Thyroid gland (tissue), 4 donors: ENCODE measurements at regions of chr20 and their contacts with region 1.

Region 1: DNA sequence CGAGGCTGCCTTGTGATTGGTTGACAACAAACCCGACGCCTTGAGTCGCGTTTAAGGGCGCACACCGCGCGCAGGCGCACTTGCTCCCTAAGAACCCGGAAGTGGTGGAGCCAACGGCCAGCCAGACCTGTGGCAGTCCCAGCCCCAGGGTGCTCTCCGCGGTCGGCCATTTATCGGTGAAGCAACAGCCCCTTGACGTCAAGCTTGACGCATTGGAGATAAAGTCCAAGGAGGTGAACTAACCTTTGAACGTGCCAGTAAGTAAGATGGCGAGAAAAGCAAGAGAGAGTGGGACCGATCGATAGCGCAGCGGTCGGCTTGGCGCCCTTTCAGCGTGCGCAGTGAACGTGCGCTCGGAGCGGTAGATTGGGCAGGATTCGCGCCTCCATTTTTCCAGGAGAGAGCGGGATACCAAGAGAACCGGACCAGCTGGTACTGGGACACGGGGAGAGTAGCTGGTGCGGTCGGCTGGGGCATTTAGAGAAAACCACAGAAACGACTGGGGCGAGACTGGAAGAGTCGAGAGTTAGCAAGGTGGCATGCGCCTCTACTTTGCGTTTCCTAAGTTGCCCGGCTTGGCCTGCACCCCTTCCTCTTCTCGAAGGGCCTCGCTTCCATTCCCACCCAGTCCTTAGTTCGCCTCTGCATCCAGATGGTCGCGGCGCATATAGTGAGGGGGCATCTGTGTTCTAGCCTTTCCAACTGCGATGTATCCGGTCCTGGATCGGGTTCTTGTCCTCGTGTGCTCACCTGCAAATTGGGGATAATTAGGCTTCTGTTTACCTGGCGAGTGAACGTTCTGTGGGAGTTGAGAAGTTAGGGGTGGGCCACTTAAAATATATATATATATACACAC is at the start of gene CSTF1:
- DNase-seq: peak; percentile 99 to 100
- H3K4me3 ChIP-seq: peak within 1 kb of the TSS; percentile 61 to 73 (median 67)
- H3K27ac ChIP-seq: peak within 1 kb of the TSS; percentile 53 to 91 (median 82)
- H3K4me1 ChIP-seq: peaks cover 15 to 18% of the 10 kb centered on the region in 2 donors
- H3K27me3 ChIP-seq: no peaks in the 10 kb centered on the region
- CTCF ChIP-seq: no peak
- POLR2A ChIP-seq: peak in 1 of 2 donors; percentile 72
- total RNA-seq, gene CSTF1: 26.9 to 36.8 (median 32.6) TPM

Region 2: GRCh38 chr20:56257604-56258003 is 134.9 kb before region 1 on chr20:
- intact Hi-C with region 1: no loop called
- DNase-seq: no peak
- H3K4me3 ChIP-seq: no peak overlapping the region
- H3K27ac ChIP-seq: no peak overlapping the region
- H3K4me1 ChIP-seq: no peaks in the 10 kb centered on the region
- H3K27me3 ChIP-seq: no peaks in the 10 kb centered on the region
- CTCF ChIP-seq: no peak
- POLR2A ChIP-seq: no peak

Region 3: DNA sequence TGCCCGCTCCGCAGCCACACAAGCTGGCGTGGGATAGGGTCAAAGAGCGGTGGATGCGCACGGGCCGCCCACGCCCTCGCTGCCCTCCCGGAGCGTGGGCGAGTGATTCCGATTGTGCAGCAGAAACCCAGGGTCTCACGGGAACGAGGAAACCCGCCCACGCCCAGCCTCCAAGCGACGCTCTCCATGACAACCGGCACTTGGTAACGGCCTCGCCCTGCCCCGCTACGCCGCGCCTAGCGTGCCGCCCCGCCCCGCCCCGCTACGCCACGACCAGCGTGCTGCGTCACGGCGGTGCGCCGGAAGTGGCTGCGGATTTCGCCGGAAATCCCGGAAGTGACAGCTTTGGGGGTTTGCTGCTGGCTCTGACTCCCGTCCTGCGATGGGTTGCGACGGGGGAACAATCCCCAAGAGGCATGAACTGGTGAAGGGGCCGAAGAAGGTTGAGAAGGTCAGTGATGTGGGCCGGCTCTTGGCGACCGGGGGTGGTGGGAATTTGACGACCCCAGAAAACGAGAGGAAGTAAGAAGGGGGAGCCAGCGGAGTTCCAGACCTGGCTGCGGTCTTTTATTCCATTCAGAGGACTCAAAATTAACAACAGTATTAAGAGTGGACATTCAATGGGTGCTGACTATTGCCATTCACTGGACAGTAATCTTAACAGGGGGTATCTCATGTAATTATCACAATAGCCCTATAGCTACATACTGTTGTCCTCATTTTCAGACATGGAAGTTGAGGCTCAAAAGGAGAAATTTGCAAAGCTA is 76.0 kb after region 1 on chr20 and contains the start of gene RTF2:
- intact Hi-C with region 1: loop called (anchors 5 kb)
- DNase-seq: peak; percentile 90
- H3K4me3 ChIP-seq: peak within 1 kb of the TSS; percentile 29 to 66 (median 37)
- H3K27ac ChIP-seq: peak within 1 kb of the TSS; percentile 35 to 56 (median 47)
- H3K4me1 ChIP-seq: peaks cover 7 to 10% of the 10 kb centered on the region in 2 donors
- H3K27me3 ChIP-seq: no peaks in the 10 kb centered on the region
- CTCF ChIP-seq: no peak
- POLR2A ChIP-seq: peak in 1 of 2 donors; percentile 56
- total RNA-seq, gene RTF2: 46.1 to 68.6 (median 64.2) TPM

Region 4: DNA sequence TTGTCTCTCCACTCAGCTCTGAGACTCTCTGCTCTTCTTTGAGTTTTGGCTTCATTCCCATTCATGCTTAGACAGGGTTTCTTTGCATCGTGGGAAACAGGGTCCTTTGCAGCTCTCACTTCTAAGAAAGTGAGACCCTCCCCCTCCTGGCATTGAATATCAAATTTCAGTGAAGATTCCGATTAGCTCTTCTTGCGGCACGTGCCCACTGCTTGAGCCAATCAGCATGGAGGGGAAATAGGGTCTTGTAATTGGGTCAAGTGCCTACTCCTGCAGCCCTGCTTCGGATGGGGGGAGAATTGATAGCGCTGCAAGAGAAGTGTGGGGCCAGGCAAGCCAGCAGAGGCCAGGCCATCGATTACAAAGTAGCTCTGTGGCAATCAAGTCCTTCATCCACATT is 306.2 kb after region 1 on chr20:
- intact Hi-C with region 1: no loop called
- DNase-seq: no peak
- H3K4me3 ChIP-seq: no peak overlapping the region
- H3K27ac ChIP-seq: no peak overlapping the region
- H3K4me1 ChIP-seq: no peaks in the 10 kb centered on the region
- H3K27me3 ChIP-seq: no peaks in the 10 kb centered on the region
- CTCF ChIP-seq: no peak
- POLR2A ChIP-seq: no peak